Uterus (tissue), 4 donors: ENCODE measurements at regions of chr3 and their contacts with region 1.

Region 1: DNA sequence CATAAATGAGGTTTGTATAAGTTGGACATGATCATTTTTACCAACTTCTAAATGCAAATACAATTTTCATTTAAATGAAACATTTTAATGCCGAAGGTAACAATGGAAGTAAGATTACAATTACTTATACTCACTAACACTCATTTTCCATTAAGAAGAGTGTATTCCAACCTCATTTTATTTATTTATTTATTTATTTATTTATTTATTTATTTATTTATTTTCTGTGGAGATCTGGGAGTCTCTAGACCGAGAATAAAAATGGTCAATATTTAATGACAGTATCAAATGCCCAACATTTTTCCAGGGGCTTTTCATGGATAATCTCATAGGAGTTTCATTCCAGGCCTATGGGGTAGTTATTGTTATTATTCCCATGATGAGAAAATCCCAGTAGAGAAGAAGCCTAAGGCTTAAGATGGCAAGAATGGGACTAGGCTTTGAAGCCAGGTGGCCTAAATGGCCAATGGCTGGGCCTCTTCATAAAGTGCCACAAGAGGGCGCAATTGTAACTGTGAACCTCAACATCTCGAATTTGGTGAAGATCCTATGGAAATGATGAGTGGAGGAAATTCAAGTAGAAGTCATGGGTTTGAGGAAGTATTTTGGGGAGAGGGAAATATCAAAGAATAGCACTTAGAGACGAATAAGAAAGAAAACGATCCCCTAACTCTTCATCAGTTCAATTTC is 21.3 kb downstream of the VGLL3 start:
- DNase-seq: peak in 1 of 2 donors; percentile 34
- H3K4me3 ChIP-seq: no peak overlapping the region
- H3K27ac ChIP-seq: no peak overlapping the region
- H3K4me1 ChIP-seq: no peaks in the 10 kb centered on the region
- H3K27me3 ChIP-seq: no peaks in the 10 kb centered on the region
- CTCF ChIP-seq: peak in 3 of 4 experiments; percentile 32 to 49 (median 38)
- POLR2A ChIP-seq: no peak

Region 2: GRCh38 chr3:87167628-87168456 is 198.2 kb after region 1 on chr3:
- intact Hi-C with region 1: loop called (anchors 10 kb)
- DNase-seq: no peak
- H3K4me3 ChIP-seq: peak overlapping the region; percentile 20 to 34
- H3K27ac ChIP-seq: no peak overlapping the region
- H3K4me1 ChIP-seq: no peaks in the 10 kb centered on the region
- H3K27me3 ChIP-seq: no peaks in the 10 kb centered on the region
- CTCF ChIP-seq: peak; percentile 41 to 60 (median 52)
- POLR2A ChIP-seq: no peak